ENCODE measurements at regions of chr11 and their contacts with region 1.

Region 1: DNA sequence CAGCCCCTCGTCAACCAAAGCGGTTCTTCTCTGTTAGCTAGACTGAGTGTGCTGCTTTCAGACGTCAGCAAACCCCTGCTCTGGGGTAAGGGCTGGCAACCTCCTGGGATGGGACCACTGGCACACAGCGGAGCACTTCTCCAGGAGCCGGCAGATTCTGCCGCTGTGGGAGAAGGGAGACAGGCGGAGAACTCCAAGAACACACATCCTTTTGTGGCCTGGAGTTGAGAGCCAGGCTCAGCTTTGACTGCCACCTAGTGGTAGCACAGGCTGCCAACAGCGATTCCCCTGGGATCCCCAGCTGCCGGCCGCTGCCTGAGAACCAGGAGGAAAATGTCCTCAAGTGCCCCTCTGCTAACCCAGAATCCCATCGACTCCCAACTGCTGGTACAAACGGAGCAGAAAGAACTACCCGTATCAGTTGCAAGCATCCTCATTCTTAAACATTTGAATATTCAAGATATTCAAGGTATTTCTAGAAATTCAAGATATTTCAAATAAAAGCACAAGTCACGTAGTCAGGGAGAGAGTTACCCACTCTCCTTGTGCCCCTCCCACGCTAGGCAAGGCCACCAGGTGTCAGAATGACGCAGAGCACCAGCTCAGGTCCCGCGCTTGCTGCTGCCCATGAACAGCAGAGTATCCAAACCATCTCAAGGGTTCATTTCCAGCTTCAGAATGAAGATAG is 4.9 kb downstream of the LTO1 start:
- DNase-seq: peak; percentile 26 to 77 (median 48)
- ATAC-seq: peak; percentile 25
- H3K4me3 ChIP-seq: no peak overlapping the region
- H3K4me3 Mint-ChIP-seq: peak overlapping the region; percentile 75
- H3K27ac ChIP-seq: no peak overlapping the region
- H3K27ac Mint-ChIP-seq: peak overlapping the region; percentile 10
- H3K4me1 ChIP-seq: peaks cover 25% of the 10 kb centered on the region
- H3K4me1 Mint-ChIP-seq: peaks cover 36% of the 10 kb centered on the region
- H3K27me3 ChIP-seq: no peaks in the 10 kb centered on the region
- H3K27me3 Mint-ChIP-seq: no peaks in the 10 kb centered on the region
- CTCF ChIP-seq: peak; percentile 91

Region 2: GRCh38 chr11:68751004-68751856 is 919.1 kb before region 1 on chr11 and contains the start of gene TESMIN:
- CTCF ChIA-PET with region 1: no interaction called
- POLR2A ChIA-PET with region 1: no interaction called
- intact Hi-C with region 1: loop called in 1 of 2 experiments (anchors 10 kb)
- DNase-seq: peak; percentile 86 to 97 (median 94)
- ATAC-seq: peak; percentile 94
- H3K4me3 ChIP-seq: peak within 1 kb of the TSS; percentile 41
- H3K4me3 Mint-ChIP-seq: peak within 1 kb of the TSS; percentile 81
- H3K27ac ChIP-seq: no peak within 1 kb of the TSS
- H3K27ac Mint-ChIP-seq: no peak within 1 kb of the TSS
- H3K4me1 ChIP-seq: peaks cover 18% of the 10 kb centered on the region
- H3K4me1 Mint-ChIP-seq: peaks cover 11% of the 10 kb centered on the region
- H3K27me3 ChIP-seq: no peaks in the 10 kb centered on the region
- H3K27me3 Mint-ChIP-seq: no peaks in the 10 kb centered on the region
- CTCF ChIP-seq: no peak
- total RNA-seq, gene TESMIN: 3.7 to 4.3 TPM

Region 3: DNA sequence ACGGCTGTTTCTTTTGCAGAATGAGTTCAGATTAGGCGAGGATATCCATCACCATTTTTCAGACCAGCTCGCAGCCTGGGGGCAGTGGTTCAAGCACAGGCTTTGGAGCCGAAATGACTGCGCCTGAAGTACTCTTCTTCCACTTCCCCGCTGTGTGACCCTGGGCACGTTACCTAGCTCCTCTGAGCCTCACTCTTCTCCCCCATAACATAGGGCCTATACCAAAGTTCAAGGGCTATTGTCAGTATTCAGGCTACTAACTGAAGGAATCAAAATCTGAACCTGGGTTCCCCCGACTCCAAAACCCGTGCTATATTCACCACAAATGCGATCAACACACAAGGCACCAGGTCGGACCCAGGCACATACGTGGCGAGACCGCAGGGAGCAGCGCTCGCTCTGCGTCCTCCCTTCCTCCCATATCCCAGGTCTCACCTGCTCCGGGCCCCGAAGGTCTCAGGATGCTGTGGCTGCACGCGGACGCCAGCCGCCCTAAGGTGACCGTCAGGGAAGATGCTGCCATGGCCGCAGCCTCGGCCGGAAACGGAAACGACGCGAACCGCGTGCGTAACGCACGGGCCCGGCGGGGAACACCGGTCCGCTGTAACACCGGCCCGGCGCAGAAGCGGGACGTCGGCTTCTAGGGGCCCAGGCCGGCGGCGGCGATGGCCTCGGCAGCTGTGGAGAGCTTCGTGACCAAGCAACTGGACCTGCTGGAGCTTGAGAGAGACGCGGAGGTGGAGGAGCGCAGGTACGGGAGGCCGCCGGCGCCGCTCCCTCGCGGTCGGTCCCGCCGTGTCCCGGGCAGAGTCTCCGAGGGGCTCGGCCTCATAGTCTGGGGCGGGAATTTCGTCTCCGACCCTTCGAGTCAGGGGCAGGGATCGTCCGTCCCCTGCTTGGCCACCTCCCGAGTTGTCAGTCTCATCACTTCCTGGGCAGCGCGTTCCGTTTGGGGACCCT is 766.7 kb before region 1 on chr11 and contains the starts of genes IGHMBP2 and MRPL21:
- CTCF ChIA-PET with region 1: no interaction called
- POLR2A ChIA-PET with region 1: no interaction called
- intact Hi-C with region 1: loop called in 1 of 2 experiments (anchors 5 kb)
- DNase-seq: peak; percentile 71 to 93 (median 82)
- ATAC-seq: peak; percentile 92
- H3K4me3 ChIP-seq: peak within 1 kb of the TSS; percentile 95
- H3K4me3 Mint-ChIP-seq: peak within 1 kb of the TSS; percentile 98
- H3K27ac ChIP-seq: peak within 1 kb of the TSS; percentile 57 to 67
- H3K27ac Mint-ChIP-seq: peak within 1 kb of the TSS; percentile 92
- H3K4me1 ChIP-seq: peaks cover 31% of the 10 kb centered on the region
- H3K4me1 Mint-ChIP-seq: peaks cover 50% of the 10 kb centered on the region
- H3K27me3 ChIP-seq: no peaks in the 10 kb centered on the region
- H3K27me3 Mint-ChIP-seq: no peaks in the 10 kb centered on the region
- CTCF ChIP-seq: no peak
- total RNA-seq, gene IGHMBP2: 17.5 to 18.5 TPM
- total RNA-seq, gene MRPL21: 47.5 to 48.0 TPM

Region 4: DNA sequence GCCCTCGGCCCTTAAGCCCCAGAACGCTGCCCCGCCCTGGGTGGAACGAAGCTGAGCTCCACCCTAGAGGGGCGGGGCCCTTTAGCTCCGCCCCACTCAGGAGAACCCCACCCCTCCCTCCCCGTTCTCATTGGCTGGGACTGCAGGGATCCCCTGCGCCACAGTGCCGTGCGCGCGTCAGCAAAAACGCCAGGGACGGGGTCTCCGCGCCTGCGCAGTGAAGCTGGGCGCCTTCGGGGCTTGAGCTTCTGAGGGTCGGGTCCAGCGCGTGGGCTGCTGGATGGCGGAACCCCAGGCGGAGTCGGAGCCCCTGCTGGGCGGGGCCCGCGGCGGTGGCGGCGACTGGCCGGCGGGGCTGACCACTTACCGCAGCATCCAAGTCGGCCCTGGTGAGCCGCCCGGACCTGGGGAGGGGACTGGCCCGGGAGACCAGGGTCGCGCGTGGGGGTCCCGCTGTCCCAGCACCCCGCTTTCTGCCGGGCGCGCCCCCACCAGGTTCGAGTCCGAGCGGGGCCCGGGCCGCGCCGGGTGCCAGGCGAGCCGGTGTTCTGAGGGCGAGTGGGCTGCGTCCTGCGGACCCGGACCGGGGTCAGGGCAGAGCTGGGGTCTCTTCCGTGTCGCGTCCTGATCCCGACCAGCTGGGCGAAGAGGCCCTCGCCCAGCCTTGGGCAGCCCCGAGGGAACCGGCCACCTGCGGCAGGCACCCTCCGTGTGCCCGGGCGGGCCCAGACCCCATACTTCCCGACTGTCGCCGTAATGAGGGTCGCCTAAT is 621.4 kb before region 1 on chr11 and contains the start of gene TPCN2:
- CTCF ChIA-PET with region 1: interaction called, 3 read pairs
- POLR2A ChIA-PET with region 1: no interaction called
- intact Hi-C with region 1: loop called in 1 of 2 experiments (anchors 5 kb)
- DNase-seq: peak; percentile 82 to 98 (median 89)
- ATAC-seq: peak; percentile 99
- H3K4me3 ChIP-seq: peak within 1 kb of the TSS; percentile 66
- H3K4me3 Mint-ChIP-seq: peak within 1 kb of the TSS; percentile 87
- H3K27ac ChIP-seq: peak within 1 kb of the TSS; percentile 45 to 80
- H3K27ac Mint-ChIP-seq: peak within 1 kb of the TSS; percentile 90
- H3K4me1 ChIP-seq: peaks cover 39% of the 10 kb centered on the region
- H3K4me1 Mint-ChIP-seq: peaks cover 30% of the 10 kb centered on the region
- H3K27me3 ChIP-seq: no peaks in the 10 kb centered on the region
- H3K27me3 Mint-ChIP-seq: peaks cover 5% of the 10 kb centered on the region
- CTCF ChIP-seq: no peak
- total RNA-seq, gene TPCN2: 10.2 to 11.5 TPM

Region 5: GRCh38 chr11:69101115-69101791 is 569.0 kb before region 1 on chr11:
- CTCF ChIA-PET with region 1: interaction called, 6 read pairs
- POLR2A ChIA-PET with region 1: no interaction called
- intact Hi-C with region 1: loop called (anchors 1 kb)
- DNase-seq: peak; percentile 56 to 88 (median 72)
- ATAC-seq: peak; percentile 99
- H3K4me3 ChIP-seq: no peak overlapping the region
- H3K4me3 Mint-ChIP-seq: no peak overlapping the region
- H3K27ac ChIP-seq: no peak overlapping the region
- H3K27ac Mint-ChIP-seq: no peak overlapping the region
- H3K4me1 ChIP-seq: peaks cover 7% of the 10 kb centered on the region
- H3K4me1 Mint-ChIP-seq: peaks cover 4% of the 10 kb centered on the region
- H3K27me3 ChIP-seq: peaks cover 0 to 6% of the 10 kb centered on the region in 2 experiments
- H3K27me3 Mint-ChIP-seq: no peaks in the 10 kb centered on the region
- CTCF ChIP-seq: peak; percentile 95

Region 6: GRCh38 chr11:69598157-69598556 is 72.1 kb before region 1 on chr11:
- CTCF ChIA-PET with region 1: no interaction called
- POLR2A ChIA-PET with region 1: no interaction called
- intact Hi-C with region 1: no loop called
- DNase-seq: peak in 1 of 14 experiments; percentile 7
- ATAC-seq: no peak
- H3K4me3 ChIP-seq: no peak overlapping the region
- H3K4me3 Mint-ChIP-seq: no peak overlapping the region
- H3K27ac ChIP-seq: no peak overlapping the region
- H3K27ac Mint-ChIP-seq: no peak overlapping the region
- H3K4me1 ChIP-seq: peaks cover 3% of the 10 kb centered on the region
- H3K4me1 Mint-ChIP-seq: no peaks in the 10 kb centered on the region
- H3K27me3 ChIP-seq: peaks cover 0 to 4% of the 10 kb centered on the region in 2 experiments
- H3K27me3 Mint-ChIP-seq: peaks cover 9% of the 10 kb centered on the region
- CTCF ChIP-seq: no peak

Region 7: DNA sequence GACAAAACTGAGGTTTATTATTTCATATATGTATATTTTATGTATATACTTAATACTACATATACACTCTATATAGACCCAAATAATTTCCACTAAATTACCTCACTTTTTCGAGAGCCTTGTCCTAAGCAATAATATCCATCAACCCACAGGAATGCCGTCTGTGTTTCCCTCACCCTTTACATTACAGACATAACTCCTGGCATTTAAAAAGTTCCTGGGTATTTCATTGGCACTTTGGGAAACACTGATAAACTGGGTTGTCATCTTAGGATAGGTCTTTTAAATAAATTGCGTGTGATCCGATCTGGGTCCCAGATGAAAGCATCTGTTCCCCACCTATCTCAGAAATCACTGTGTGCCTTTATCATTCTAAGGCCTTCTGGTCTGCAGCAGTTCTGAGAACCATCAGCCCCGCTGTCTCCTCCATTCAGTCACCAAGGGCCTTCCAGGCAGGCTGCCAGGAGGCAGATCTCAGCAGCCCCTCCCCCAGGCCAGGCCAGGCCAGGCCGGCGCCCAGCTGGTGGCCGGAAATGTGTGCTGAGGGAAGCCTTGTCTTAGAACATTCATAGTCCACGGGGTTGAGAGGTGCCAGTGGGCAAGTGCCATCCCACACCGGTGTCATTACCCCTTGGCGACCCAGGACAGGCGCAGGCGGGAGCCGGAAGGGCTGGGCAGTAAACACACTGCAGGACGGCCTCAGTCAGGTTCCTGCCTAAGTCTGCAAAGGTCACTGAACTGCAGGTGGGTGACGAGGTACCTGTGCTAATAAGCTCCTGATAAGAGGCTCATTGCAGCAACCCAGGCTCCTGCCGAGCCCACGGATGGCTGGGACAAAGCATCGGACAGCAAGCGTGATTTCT is 30.2 kb after region 1 on chr11:
- CTCF ChIA-PET with region 1: no interaction called
- POLR2A ChIA-PET with region 1: no interaction called
- intact Hi-C with region 1: no loop called
- DNase-seq: no peak
- ATAC-seq: no peak
- H3K4me3 ChIP-seq: no peak overlapping the region
- H3K4me3 Mint-ChIP-seq: no peak overlapping the region
- H3K27ac ChIP-seq: no peak overlapping the region
- H3K27ac Mint-ChIP-seq: no peak overlapping the region
- H3K4me1 ChIP-seq: peaks cover 11% of the 10 kb centered on the region
- H3K4me1 Mint-ChIP-seq: no peaks in the 10 kb centered on the region
- H3K27me3 ChIP-seq: peaks cover 58 to 78% of the 10 kb centered on the region in 2 experiments
- H3K27me3 Mint-ChIP-seq: peaks cover 71% of the 10 kb centered on the region
- CTCF ChIP-seq: no peak

Region 8: DNA sequence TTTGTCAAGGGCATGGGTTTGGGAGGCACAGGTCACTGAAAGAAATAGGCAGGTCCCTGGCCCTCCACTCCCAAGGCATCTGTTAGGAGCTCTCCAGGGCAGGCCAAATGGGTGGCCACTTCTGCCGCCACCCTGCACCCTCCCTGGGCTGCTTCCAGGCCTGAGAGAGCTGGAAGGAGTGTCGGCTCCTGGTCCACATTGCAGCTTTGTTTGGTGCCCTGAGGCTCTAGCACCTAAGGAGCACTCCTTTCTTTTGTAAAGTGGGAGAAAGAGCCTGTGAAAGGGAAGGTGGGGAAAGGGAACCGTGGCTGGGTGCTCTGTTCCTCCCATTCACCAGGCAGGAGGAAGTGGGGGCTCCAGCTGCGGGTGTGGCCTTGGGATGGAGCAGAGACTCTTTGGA is 117.2 kb after region 1 on chr11:
- CTCF ChIA-PET with region 1: no interaction called
- POLR2A ChIA-PET with region 1: no interaction called
- intact Hi-C with region 1: no loop called
- DNase-seq: no peak
- ATAC-seq: no peak
- H3K4me3 ChIP-seq: no peak overlapping the region
- H3K4me3 Mint-ChIP-seq: no peak overlapping the region
- H3K27ac ChIP-seq: no peak overlapping the region
- H3K27ac Mint-ChIP-seq: no peak overlapping the region
- H3K4me1 ChIP-seq: no peaks in the 10 kb centered on the region
- H3K4me1 Mint-ChIP-seq: no peaks in the 10 kb centered on the region
- H3K27me3 ChIP-seq: no peaks in the 10 kb centered on the region
- H3K27me3 Mint-ChIP-seq: peaks cover 5% of the 10 kb centered on the region
- CTCF ChIP-seq: no peak

Region 9: DNA sequence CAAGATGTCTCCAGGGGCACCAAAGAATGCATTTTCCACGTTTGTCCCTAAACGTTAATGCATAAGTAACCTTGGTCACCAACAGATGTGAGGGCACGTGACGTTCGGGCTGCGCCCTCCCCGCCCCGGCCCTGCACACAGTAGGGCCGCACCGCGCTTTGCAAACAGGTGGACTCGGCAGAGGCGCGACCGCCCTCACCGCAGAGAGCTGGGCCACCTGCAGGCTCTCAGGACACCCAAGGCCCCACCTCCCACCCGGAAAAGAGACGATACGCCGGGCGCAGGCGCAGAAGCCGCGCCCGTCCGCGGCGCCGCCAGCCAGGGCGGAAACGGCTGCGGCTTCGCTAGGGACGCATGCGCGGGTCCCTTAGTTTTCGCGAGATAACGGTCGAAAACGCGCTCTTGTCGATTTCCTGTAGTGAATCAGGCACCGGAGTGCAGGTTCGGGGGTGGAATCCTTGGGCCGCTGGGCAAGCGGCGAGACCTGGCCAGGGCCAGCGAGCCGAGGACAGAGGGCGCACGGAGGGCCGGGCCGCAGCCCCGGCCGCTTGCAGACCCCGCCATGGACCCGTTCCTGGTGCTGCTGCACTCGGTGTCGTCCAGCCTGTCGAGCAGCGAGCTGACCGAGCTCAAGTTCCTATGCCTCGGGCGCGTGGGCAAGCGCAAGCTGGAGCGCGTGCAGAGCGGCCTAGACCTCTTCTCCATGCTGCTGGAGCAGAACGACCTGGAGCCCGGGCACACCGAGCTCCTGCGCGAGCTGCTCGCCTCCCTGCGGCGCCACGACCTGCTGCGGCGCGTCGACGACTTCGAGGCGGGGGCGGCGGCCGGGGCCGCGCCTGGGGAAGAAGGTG is 532.8 kb after region 1 on chr11 and contains the start of gene FADD:
- CTCF ChIA-PET with region 1: no interaction called
- POLR2A ChIA-PET with region 1: interaction called, 11 read pairs
- intact Hi-C with region 1: loop called in 1 of 2 experiments (anchors 2 kb)
- DNase-seq: peak; percentile 84 to 97 (median 89)
- ATAC-seq: peak; percentile 52
- H3K4me3 ChIP-seq: peak within 1 kb of the TSS; percentile 81
- H3K4me3 Mint-ChIP-seq: peak within 1 kb of the TSS; percentile 99
- H3K27ac ChIP-seq: peak within 1 kb of the TSS; percentile 90 to 97
- H3K27ac Mint-ChIP-seq: peak within 1 kb of the TSS; percentile 98
- H3K4me1 ChIP-seq: peaks cover 44% of the 10 kb centered on the region
- H3K4me1 Mint-ChIP-seq: peaks cover 48% of the 10 kb centered on the region
- H3K27me3 ChIP-seq: no peaks in the 10 kb centered on the region
- H3K27me3 Mint-ChIP-seq: no peaks in the 10 kb centered on the region
- CTCF ChIP-seq: no peak
- total RNA-seq, gene FADD: 14.5 to 16.5 TPM

Region 10: DNA sequence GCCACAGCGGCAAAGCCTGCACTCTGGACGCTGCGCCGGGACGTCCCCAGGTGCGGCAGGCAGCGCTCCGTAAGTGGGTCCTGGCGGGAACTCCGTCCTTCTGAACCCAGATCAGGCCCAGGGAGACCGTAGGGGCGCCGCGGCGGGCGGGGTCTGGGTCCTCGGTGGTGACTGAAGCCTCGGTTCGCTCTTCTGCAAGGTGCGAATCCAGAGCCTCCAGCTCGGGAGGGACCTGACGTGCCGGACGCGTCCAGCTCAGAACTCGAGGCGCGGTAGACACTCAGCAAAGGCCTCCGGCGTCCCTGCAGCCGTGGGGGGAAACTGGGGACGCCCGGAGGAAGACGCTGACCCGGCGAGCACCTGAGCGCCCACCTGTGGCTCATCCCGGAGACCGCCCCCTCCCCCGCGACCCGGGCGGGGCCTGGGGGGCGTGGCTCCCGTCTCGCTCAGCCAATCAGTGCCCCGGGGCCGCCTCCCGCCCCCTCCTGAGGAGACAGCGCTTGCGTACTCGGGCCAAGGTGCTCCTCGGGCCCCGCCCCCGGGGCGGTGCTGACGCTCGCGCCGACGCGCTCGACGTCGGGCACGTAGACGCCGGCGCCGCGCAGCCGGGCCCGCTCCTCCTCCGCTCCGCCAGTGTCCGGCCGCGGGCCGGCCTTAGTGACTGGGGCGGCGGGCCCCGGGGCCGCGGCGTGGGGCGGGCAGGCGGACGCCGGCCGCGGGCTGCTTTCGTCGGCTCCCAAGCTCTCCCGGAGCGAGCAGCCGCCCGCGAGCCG is 600.0 kb after region 1 on chr11 and contains the start of gene PPFIA1:
- CTCF ChIA-PET with region 1: no interaction called
- POLR2A ChIA-PET with region 1: no interaction called
- intact Hi-C with region 1: loop called in 1 of 2 experiments (anchors 5 kb)
- DNase-seq: peak; percentile 89 to 98 (median 96)
- ATAC-seq: peak; percentile 92
- H3K4me3 ChIP-seq: peak within 1 kb of the TSS; percentile 98
- H3K4me3 Mint-ChIP-seq: peak within 1 kb of the TSS; percentile 94
- H3K27ac ChIP-seq: peak within 1 kb of the TSS in 1 of 2 donors; percentile 58
- H3K27ac Mint-ChIP-seq: peak within 1 kb of the TSS; percentile 88
- H3K4me1 ChIP-seq: peaks cover 24% of the 10 kb centered on the region
- H3K4me1 Mint-ChIP-seq: peaks cover 35% of the 10 kb centered on the region
- H3K27me3 ChIP-seq: peaks cover 4 to 7% of the 10 kb centered on the region in 2 experiments
- H3K27me3 Mint-ChIP-seq: peaks cover 12% of the 10 kb centered on the region
- CTCF ChIP-seq: no peak
- total RNA-seq, gene PPFIA1: 34.3 to 42.0 TPM

Measured in CD4-positive, alpha-beta T cell (primary cell).